ENCODE measurements at regions of chr7 and their contacts with region 1.

Region 1: DNA sequence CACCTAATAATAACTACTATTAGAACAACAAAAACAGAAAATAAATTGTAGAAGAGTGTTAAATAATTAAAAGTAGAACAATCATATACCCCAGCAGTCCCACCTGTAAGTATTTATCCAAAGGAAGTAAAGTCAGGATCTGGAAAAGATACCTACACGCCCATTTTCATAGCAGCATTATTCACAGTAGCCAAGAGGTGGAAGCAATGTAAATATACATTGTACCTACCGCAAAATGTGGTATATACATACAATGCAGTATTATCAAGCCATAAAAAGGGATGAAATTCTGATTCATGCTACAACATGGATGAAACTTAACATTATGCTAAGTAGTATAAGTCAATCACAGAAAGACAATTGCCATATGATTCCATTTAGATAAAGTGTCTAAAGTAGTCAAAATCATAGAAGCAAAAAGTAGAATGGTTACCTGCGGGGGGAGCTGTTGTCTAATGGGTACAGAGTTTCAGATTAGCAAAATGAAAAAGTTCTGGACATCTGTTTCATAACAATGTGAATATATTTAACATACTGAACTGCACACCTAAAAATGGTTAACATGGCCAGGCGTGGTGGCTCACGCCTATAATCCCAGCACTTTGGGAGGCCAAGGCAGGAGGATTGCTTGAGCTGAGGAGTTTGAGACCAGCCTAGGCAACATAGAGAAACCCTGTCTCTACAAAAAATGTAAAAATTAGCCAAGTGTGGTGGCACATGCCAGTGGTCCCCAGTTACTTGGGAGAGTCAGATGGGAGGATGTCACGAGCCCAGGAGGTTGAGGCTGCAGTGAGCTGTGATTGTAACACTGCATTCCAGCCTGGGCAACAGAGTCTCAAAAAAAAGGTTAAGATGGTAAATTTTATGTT is 6.0 kb upstream of the TMED4 start:
- DNase-seq: peak; percentile 54 to 84
- H3K4me3 ChIP-seq: no peak overlapping the region
- H3K27ac ChIP-seq: no peak overlapping the region
- H3K4me1 ChIP-seq: peaks cover 0 to 9% (median 8%) of the 10 kb centered on the region in 4 donors
- H3K27me3 ChIP-seq: no peaks in the 10 kb centered on the region
- CTCF ChIP-seq: peak in 5 of 7 experiments; percentile 15 to 72 (median 41)
- EP300 ChIP-seq: no peak
- POLR2A ChIP-seq: no peak

Region 2: GRCh38 chr7:43721193-43721806 is 866.8 kb before region 1 on chr7:
- intact Hi-C with region 1: no loop called
- DNase-seq: peak in 1 of 2 donors; percentile 77
- H3K4me3 ChIP-seq: no peak overlapping the region
- H3K27ac ChIP-seq: no peak overlapping the region
- H3K4me1 ChIP-seq: peaks cover 0 to 29% (median 12%) of the 10 kb centered on the region in 4 donors
- H3K27me3 ChIP-seq: no peaks in the 10 kb centered on the region
- CTCF ChIP-seq: peak in 5 of 7 experiments; percentile 45 to 70 (median 47)
- EP300 ChIP-seq: no peak
- POLR2A ChIP-seq: no peak

Region 3: DNA sequence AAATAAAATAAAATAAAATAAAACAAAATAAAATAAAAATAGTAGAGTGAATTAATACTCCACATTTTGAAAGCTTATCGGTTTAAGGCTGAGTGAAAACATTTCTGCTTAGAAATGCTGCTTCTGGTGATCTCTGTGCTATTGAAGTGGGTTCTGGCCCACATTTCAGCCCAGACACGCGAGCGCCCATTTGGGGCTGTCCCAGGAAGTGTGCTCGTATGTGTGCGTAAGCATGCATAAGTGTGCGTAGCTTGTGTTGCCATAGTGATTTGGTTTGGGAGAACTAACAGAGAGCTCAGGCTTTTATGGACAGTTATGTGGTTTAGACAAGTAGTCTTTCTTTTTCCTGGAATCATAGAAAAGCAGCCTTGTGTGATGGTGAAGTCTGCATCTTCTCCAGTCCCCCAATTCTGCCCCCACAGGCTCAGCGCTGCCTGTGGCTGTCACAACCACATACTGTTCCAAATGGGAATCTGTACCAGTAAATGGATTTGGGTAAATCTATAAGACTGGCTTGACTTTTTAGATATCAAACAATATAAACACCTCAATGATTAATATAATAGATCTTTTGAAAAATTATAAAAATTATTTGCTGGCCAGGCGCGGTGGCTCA is 327.0 kb after region 1 on chr7:
- intact Hi-C with region 1: loop called (anchors 5 kb)
- DNase-seq: peak in 1 of 2 donors; percentile 76
- H3K4me3 ChIP-seq: no peak overlapping the region
- H3K27ac ChIP-seq: no peak overlapping the region
- H3K4me1 ChIP-seq: peaks cover 0 to 5% (median 0%) of the 10 kb centered on the region in 4 donors
- H3K27me3 ChIP-seq: no peaks in the 10 kb centered on the region
- CTCF ChIP-seq: no peak
- EP300 ChIP-seq: no peak
- POLR2A ChIP-seq: no peak

Measured in stomach (tissue), 19 donors.